Mammary epithelial cell (primary cell): ENCODE measurements at regions of chr1 and their contacts with region 1.

Region 1: GRCh38 chr1:174262349-174263241 is 103.3 kb downstream of the RABGAP1L start:
- DNase-seq: peak; percentile 70
- H3K4me3 ChIP-seq: no peak overlapping the region
- H3K27ac ChIP-seq: no peak overlapping the region
- H3K4me1 ChIP-seq: peaks cover 6% of the 10 kb centered on the region
- H3K27me3 ChIP-seq: no peaks in the 10 kb centered on the region
- CTCF ChIP-seq: peak; percentile 81 to 84

Region 2: GRCh38 chr1:174726167-174726879 is 463.7 kb after region 1 on chr1:
- CTCF ChIA-PET with region 1: interaction called, 11 read pairs
- dilution Hi-C with region 1: no loop called
- in situ Hi-C with region 1: no loop called
- intact Hi-C with region 1: loop called (anchors 1 kb)
- DNase-seq: no peak
- H3K4me3 ChIP-seq: no peak overlapping the region
- H3K27ac ChIP-seq: no peak overlapping the region
- H3K4me1 ChIP-seq: no peaks in the 10 kb centered on the region
- H3K27me3 ChIP-seq: no peaks in the 10 kb centered on the region
- CTCF ChIP-seq: peak; percentile 31 to 61

Region 3: DNA sequence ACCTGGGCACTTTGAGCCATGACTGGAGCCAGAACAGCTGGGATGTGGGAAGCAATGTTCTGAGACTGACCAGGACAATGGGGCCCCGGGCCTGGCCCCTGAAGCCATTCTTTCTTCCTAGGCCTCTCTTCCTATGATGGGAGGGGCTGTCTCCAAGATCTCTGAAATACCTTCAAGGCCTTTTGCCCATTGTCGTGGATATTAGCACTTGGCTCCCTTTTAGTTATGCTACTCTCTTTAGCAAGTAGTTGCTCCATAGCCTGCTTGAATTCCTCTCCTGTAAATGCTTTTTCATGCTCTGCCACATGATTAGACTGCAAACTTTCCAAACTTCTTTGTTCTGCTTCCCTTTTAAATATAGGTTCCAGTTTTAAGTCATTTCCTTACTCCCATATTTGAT is 474.2 kb after region 1 on chr1:
- CTCF ChIA-PET with region 1: no interaction called
- dilution Hi-C with region 1: no loop called
- in situ Hi-C with region 1: loop called (anchors 5 kb)
- intact Hi-C with region 1: no loop called
- DNase-seq: no peak
- H3K4me3 ChIP-seq: no peak overlapping the region
- H3K27ac ChIP-seq: no peak overlapping the region
- H3K4me1 ChIP-seq: no peaks in the 10 kb centered on the region
- H3K27me3 ChIP-seq: no peaks in the 10 kb centered on the region
- CTCF ChIP-seq: no peak

Region 4: DNA sequence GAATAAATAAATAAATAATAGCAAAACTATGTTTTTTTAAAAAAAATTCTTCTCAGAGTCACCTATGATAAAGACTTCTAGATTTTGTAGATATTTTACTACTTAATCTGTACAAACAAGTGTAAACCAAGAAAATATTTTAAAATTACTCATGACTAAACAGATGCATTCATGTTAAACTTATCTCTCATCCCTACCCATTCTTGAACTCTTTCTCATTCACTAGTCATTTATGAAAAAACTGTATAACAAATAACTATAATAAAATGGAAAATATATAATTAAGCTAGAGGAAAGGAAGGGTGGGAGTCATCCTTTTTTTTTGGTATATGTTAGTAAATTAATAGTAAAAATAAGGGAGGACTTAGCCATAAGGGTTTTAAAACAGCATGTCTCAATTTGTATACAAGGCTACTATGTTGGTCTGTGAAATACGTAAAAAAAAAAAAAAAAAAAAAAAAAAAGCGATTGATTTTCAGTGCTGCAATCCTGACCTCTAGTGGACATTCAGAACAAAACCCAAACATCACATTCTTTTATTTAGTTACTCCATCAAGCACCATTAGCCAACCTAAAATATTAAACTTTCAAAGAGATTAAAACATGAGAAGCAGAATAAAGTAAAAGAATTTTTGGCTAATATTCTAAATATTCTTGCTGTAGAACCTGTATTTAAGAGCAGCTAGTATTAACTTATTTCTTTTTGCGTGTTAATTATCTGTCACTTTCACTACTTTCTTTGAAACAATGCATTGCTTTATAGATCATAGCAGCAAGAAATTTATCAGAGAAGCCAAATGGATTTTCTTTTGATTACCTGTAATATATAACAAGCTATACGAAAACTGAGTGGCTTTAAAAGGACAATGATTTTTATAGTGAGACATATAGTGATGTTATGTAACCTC is 481.3 kb after region 1 on chr1:
- CTCF ChIA-PET with region 1: interaction called, 10 read pairs
- dilution Hi-C with region 1: no loop called
- in situ Hi-C with region 1: loop called (anchors 5 kb)
- intact Hi-C with region 1: loop called (anchors 1 kb)
- DNase-seq: peak; percentile 28
- H3K4me3 ChIP-seq: no peak overlapping the region
- H3K27ac ChIP-seq: no peak overlapping the region
- H3K4me1 ChIP-seq: no peaks in the 10 kb centered on the region
- H3K27me3 ChIP-seq: no peaks in the 10 kb centered on the region
- CTCF ChIP-seq: peak; percentile 54 to 55